Naive thymus-derived CD4-positive, alpha-beta T cell (primary cell): ENCODE measurements at regions of chr6 and their contacts with region 1.

Region 1: GRCh38 chr6:2634139-2634964 is 116.4 kb downstream of the MYLK4 start:
- DNase-seq: peak; percentile 65 to 88 (median 81)
- ATAC-seq: peak; percentile 97
- H3K4me3 ChIP-seq: peak overlapping the region; percentile 47
- H3K4me3 Mint-ChIP-seq: peak overlapping the region; percentile 65 to 85 (median 78)
- H3K27ac ChIP-seq: no peak overlapping the region
- H3K27ac Mint-ChIP-seq: peak overlapping the region in 4 of 9 donors; percentile 32 to 51 (median 46)
- H3K4me1 ChIP-seq: no peaks in the 10 kb centered on the region
- H3K4me1 Mint-ChIP-seq: peaks cover 0 to 7% (median 0%) of the 10 kb centered on the region in 7 donors
- H3K27me3 ChIP-seq: no peaks in the 10 kb centered on the region
- H3K27me3 Mint-ChIP-seq: peaks cover 14 to 37% (median 21%) of the 10 kb centered on the region in 5 donors

Region 2: DNA sequence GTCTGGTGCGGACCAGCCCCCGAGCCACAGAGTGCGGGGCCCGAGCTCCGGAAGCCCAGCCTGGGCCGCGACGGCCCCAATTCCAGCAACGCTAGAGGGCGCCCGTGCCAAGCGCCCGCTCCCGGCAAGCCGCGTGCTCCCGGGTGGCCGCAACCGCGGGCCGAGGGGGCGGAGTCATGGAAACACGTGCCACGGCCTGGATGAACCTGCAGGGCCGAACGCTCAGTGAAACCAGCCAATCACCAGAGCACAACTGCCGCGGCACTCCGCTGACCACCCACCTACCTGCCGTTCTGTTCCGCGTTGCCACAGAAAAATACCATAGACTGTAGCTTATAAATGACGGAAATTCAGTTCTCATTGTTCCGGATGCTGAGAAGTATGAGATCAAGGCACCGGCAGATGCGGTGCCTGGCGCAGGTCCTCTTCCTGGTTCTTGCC is 1110.3 kb before region 1 on chr6:
- CTCF ChIA-PET with region 1: interaction called, 5 read pairs
- POLR2A ChIA-PET with region 1: no interaction called
- intact Hi-C with region 1: loop called in 1 of 2 experiments (anchors 5 kb)
- DNase-seq: peak; percentile 58 to 82 (median 75)
- ATAC-seq: peak; percentile 89
- H3K4me3 ChIP-seq: peak overlapping the region; percentile 60
- H3K4me3 Mint-ChIP-seq: peak overlapping the region; percentile 64 to 87 (median 79)
- H3K27ac ChIP-seq: no peak overlapping the region
- H3K27ac Mint-ChIP-seq: peak overlapping the region; percentile 51 to 93 (median 90)
- H3K4me1 ChIP-seq: peaks cover 19 to 50% of the 10 kb centered on the region in 2 donors
- H3K4me1 Mint-ChIP-seq: peaks cover 35 to 58% (median 48%) of the 10 kb centered on the region in 7 donors
- H3K27me3 ChIP-seq: no peaks in the 10 kb centered on the region
- H3K27me3 Mint-ChIP-seq: peaks cover 0 to 16% (median 4%) of the 10 kb centered on the region in 5 donors

Region 3: GRCh38 chr6:1604158-1605030 is 1030.0 kb before region 1 on chr6:
- CTCF ChIA-PET with region 1: interaction called, 14 read pairs
- POLR2A ChIA-PET with region 1: interaction called, 3 read pairs
- intact Hi-C with region 1: loop called (anchors 1 to 2 kb)
- DNase-seq: peak in 8 of 9 donors; percentile 40 to 81 (median 71)
- ATAC-seq: peak; percentile 86
- H3K4me3 ChIP-seq: no peak overlapping the region
- H3K4me3 Mint-ChIP-seq: peak overlapping the region in 5 of 10 donors; percentile 25 to 74 (median 50)
- H3K27ac ChIP-seq: no peak overlapping the region
- H3K27ac Mint-ChIP-seq: no peak overlapping the region
- H3K4me1 ChIP-seq: peaks cover 15 to 35% of the 10 kb centered on the region in 2 donors
- H3K4me1 Mint-ChIP-seq: peaks cover 22 to 41% (median 36%) of the 10 kb centered on the region in 7 donors
- H3K27me3 ChIP-seq: peaks cover 8 to 26% of the 10 kb centered on the region in 2 donors
- H3K27me3 Mint-ChIP-seq: peaks cover 77 to 84% (median 80%) of the 10 kb centered on the region in 5 donors

Region 4: DNA sequence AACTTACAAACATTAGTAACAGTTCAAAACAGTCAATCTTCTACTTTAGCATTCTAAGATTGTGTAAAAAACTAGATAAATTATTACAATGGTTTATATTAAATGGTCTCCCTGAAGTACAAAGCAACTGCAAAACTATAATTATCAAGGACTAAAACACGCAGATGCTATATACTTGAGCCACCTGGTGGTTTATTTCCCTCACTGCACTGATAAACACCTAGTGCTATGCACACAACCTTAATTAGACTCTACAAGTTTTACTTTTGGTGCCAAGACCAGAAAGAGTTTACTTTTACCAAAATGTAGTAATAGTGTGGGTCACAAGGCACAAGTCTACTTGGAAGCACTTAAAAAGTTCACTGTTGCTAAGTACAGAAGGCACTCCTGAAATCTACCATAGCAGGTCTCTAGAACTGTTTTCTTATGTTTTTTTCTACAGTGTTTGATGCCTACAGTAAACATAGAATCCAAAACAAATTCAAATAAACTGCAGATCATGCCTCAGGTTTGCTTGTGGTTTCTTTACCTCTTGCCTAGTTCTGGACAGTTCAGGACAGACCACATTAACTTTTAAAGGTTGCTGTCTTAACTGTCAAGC is 438.2 kb before region 1 on chr6:
- CTCF ChIA-PET with region 1: no interaction called
- POLR2A ChIA-PET with region 1: no interaction called
- intact Hi-C with region 1: loop called in 1 of 2 experiments (anchors 1 kb)
- DNase-seq: peak in 6 of 9 donors; percentile 12 to 51 (median 36)
- ATAC-seq: peak; percentile 77
- H3K4me3 ChIP-seq: no peak overlapping the region
- H3K4me3 Mint-ChIP-seq: no peak overlapping the region
- H3K27ac ChIP-seq: no peak overlapping the region
- H3K27ac Mint-ChIP-seq: no peak overlapping the region
- H3K4me1 ChIP-seq: no peaks in the 10 kb centered on the region
- H3K4me1 Mint-ChIP-seq: peaks cover 0 to 4% (median 0%) of the 10 kb centered on the region in 7 donors
- H3K27me3 ChIP-seq: no peaks in the 10 kb centered on the region
- H3K27me3 Mint-ChIP-seq: peaks cover 0 to 10% (median 0%) of the 10 kb centered on the region in 5 donors

Region 5: GRCh38 chr6:2353412-2354137 is 280.8 kb before region 1 on chr6:
- CTCF ChIA-PET with region 1: interaction called, 3 read pairs
- POLR2A ChIA-PET with region 1: no interaction called
- intact Hi-C with region 1: loop called (anchors 2 to 5 kb)
- DNase-seq: peak; percentile 9 to 48 (median 39)
- ATAC-seq: peak; percentile 42
- H3K4me3 ChIP-seq: no peak overlapping the region
- H3K4me3 Mint-ChIP-seq: no peak overlapping the region
- H3K27ac ChIP-seq: no peak overlapping the region
- H3K27ac Mint-ChIP-seq: no peak overlapping the region
- H3K4me1 ChIP-seq: no peaks in the 10 kb centered on the region
- H3K4me1 Mint-ChIP-seq: no peaks in the 10 kb centered on the region
- H3K27me3 ChIP-seq: no peaks in the 10 kb centered on the region
- H3K27me3 Mint-ChIP-seq: peaks cover 0 to 7% (median 0%) of the 10 kb centered on the region in 5 donors

Region 6: GRCh38 chr6:2542858-2543218 is 91.5 kb before region 1 on chr6:
- CTCF ChIA-PET with region 1: no interaction called
- POLR2A ChIA-PET with region 1: no interaction called
- intact Hi-C with region 1: loop called in 1 of 2 experiments (anchors 5 kb)
- DNase-seq: peak in 8 of 9 donors; percentile 20 to 64 (median 49)
- ATAC-seq: peak; percentile 87
- H3K4me3 ChIP-seq: peak overlapping the region; percentile 14
- H3K4me3 Mint-ChIP-seq: peak overlapping the region; percentile 18 to 73 (median 53)
- H3K27ac ChIP-seq: no peak overlapping the region
- H3K27ac Mint-ChIP-seq: peak overlapping the region in 3 of 9 donors; percentile 1 to 61 (median 15)
- H3K4me1 ChIP-seq: peaks cover 16 to 20% of the 10 kb centered on the region in 2 donors
- H3K4me1 Mint-ChIP-seq: peaks cover 17 to 35% (median 25%) of the 10 kb centered on the region in 7 donors
- H3K27me3 ChIP-seq: peaks cover 0 to 4% of the 10 kb centered on the region in 2 donors
- H3K27me3 Mint-ChIP-seq: peaks cover 57 to 77% (median 63%) of the 10 kb centered on the region in 5 donors

Region 7: GRCh38 chr6:3596766-3597165 is 962.4 kb after region 1 on chr6:
- CTCF ChIA-PET with region 1: no interaction called
- POLR2A ChIA-PET with region 1: no interaction called
- intact Hi-C with region 1: no loop called
- DNase-seq: no peak
- ATAC-seq: no peak
- H3K4me3 ChIP-seq: no peak overlapping the region
- H3K4me3 Mint-ChIP-seq: no peak overlapping the region
- H3K27ac ChIP-seq: no peak overlapping the region
- H3K27ac Mint-ChIP-seq: no peak overlapping the region
- H3K4me1 ChIP-seq: no peaks in the 10 kb centered on the region
- H3K4me1 Mint-ChIP-seq: no peaks in the 10 kb centered on the region
- H3K27me3 ChIP-seq: no peaks in the 10 kb centered on the region
- H3K27me3 Mint-ChIP-seq: peaks cover 20 to 34% (median 27%) of the 10 kb centered on the region in 5 donors

Region 8: DNA sequence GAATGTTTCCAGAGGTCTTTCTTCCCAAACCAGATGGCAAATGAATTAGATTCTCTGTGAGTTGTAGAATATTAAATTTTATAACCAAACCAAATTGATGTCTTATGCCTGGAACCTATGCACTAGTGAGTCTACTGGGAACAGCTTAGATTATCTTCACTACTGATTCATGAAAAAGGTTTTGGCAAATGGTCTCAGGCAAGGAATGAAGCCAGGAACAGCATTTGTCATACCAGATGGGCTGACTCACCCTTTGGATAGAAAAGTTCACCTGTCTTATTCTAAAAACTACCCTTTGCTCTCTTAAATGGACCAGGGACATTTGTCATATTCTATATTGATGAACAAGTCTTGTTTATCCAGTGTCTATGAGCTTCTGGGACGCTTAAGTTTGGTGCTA is 1636.4 kb after region 1 on chr6:
- CTCF ChIA-PET with region 1: no interaction called
- POLR2A ChIA-PET with region 1: no interaction called
- intact Hi-C with region 1: no loop called
- DNase-seq: no peak
- ATAC-seq: no peak
- H3K4me3 ChIP-seq: no peak overlapping the region
- H3K4me3 Mint-ChIP-seq: no peak overlapping the region
- H3K27ac ChIP-seq: no peak overlapping the region
- H3K27ac Mint-ChIP-seq: no peak overlapping the region
- H3K4me1 ChIP-seq: no peaks in the 10 kb centered on the region
- H3K4me1 Mint-ChIP-seq: no peaks in the 10 kb centered on the region
- H3K27me3 ChIP-seq: no peaks in the 10 kb centered on the region
- H3K27me3 Mint-ChIP-seq: peaks cover 2 to 17% (median 6%) of the 10 kb centered on the region in 5 donors